Left cardiac atrium (tissue), 4 donors: ENCODE measurements at regions of chr12 and their contacts with region 1.

Region 1: DNA sequence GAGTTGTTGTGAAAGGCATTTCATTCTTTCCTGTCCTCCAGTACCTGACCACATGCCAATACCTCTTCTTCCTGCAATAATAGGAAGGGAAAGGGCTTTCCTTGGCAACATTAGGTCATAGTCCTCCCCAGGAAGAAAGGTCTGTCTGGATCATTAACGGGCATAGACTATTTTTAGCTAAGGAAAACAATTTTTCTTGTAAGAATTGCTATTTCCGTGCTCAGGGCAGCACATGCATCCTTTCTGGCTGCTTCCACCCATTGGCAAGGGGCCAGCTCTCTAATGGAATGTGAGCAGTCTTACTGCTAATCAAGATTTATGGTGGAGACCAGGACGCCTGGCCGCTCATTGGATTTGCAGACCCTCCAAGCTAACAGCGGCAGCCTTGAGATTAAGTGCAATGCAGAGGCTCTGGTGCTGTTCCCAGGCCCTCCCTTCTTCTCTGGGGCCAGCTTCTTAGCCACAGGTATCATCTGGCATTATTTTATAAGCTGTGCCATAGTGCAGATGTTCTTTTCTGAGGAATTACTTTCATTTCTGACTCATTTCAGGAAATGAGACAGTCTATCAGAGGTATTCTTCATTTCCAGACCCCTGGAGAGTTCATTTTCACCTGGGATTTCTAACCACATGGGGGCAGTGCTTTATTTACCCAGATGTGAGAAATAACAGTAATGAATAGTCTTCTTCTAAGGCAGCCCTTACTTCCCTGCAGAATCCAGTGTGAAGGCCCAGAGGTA is 52.9 kb downstream of the ANO6 start:
- DNase-seq: peak; percentile 92
- ATAC-seq: peak; percentile 67 to 84

Region 2: DNA sequence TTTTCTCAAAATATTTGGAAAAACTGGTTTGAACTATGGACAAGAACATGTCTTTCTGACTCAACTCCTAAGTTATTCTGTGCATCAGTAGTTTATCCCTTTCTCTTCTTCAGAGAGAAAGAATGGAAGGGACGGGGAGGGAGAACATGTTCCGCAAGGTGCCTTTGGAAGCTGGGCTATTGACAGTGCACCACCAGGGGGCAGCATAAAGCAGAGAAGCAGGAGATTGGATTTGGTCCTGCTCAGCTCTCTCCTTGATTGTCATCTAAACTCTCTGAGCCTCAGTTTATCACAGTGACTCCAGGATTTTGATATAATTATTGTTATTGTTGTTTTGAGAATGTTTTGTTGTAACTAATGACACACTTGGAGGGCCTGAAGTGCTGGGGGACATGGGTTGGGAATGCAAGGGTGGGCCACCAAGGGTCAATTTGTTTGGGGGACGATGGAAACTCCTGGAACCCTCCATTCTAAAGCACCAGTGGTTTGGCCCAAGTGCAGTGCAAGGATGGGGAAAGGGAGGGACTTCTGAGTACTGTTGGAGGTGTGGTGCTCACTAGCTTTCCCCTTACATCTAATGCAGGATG is 98.3 kb before region 1 on chr12:
- intact Hi-C with region 1: loop called in 1 of 2 experiments (anchors 10 kb)
- DNase-seq: peak; percentile 83
- ATAC-seq: peak; percentile 45 to 75

Region 3: GRCh38 chr12:45215419-45216229 is 53.2 kb before region 1 on chr12 and contains the start of gene ANO6:
- intact Hi-C with region 1: loop called in 1 of 2 experiments (anchors 2 kb)
- DNase-seq: peak; percentile 90
- ATAC-seq: peak; percentile 92 to 97
- total RNA-seq, gene ANO6: 47.2 to 48.9 TPM

Region 4: GRCh38 chr12:45388545-45388944 is 119.7 kb after region 1 on chr12:
- intact Hi-C with region 1: no loop called
- DNase-seq: no peak
- ATAC-seq: peak; percentile 66 to 67